Naive thymus-derived CD4-positive, alpha-beta T cell (primary cell): ENCODE measurements at regions of chr4 and their contacts with region 1.

Region 1: DNA sequence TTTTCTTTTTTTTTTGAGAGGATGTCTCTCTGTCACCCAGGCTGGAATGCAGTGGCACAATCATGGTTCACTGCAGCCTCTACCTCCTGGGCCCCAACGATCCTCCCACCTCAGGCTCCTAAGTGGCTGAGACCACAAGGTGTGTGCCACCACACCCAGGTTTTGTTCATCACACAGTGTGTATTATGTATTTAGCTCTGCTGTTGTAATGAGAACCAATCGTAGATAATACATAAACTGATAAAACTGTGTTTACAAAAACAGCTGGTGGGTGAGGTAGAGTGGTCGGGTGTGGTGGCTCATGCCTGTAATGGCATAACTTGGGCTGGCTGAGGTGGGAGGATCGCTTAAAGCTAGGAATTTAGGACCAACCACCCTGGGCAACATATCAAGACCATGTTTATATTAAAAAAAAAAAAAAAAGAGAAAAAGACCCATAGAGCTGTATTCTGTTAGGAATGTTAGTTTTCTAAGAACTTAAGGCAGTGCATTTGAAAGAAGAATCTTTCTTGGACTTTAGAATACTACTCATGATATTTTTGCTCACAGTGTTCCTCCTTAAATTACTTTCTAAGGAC is 34.9 kb downstream of the POLR2B start:
- DNase-seq: no peak
- ATAC-seq: no peak
- H3K4me3 ChIP-seq: no peak overlapping the region
- H3K4me3 Mint-ChIP-seq: no peak overlapping the region
- H3K27ac ChIP-seq: no peak overlapping the region
- H3K27ac Mint-ChIP-seq: peak overlapping the region in 4 of 9 donors; percentile 25 to 47 (median 29)
- H3K4me1 ChIP-seq: no peaks in the 10 kb centered on the region
- H3K4me1 Mint-ChIP-seq: peaks cover 5 to 21% (median 11%) of the 10 kb centered on the region in 7 donors
- H3K27me3 ChIP-seq: no peaks in the 10 kb centered on the region
- H3K27me3 Mint-ChIP-seq: no peaks in the 10 kb centered on the region

Region 2: GRCh38 chr4:56995525-56995924 is 18.1 kb before region 1 on chr4:
- CTCF ChIA-PET with region 1: no interaction called
- POLR2A ChIA-PET with region 1: no interaction called
- intact Hi-C with region 1: loop called in 1 of 2 experiments (anchors 2 kb)
- DNase-seq: no peak
- ATAC-seq: no peak
- H3K4me3 ChIP-seq: no peak overlapping the region
- H3K4me3 Mint-ChIP-seq: no peak overlapping the region
- H3K27ac ChIP-seq: no peak overlapping the region
- H3K27ac Mint-ChIP-seq: peak overlapping the region in 1 of 9 donors; percentile 36
- H3K4me1 ChIP-seq: no peaks in the 10 kb centered on the region
- H3K4me1 Mint-ChIP-seq: peaks cover 18 to 49% (median 31%) of the 10 kb centered on the region in 7 donors
- H3K27me3 ChIP-seq: no peaks in the 10 kb centered on the region
- H3K27me3 Mint-ChIP-seq: no peaks in the 10 kb centered on the region